Gastrocnemius medialis (tissue), 4 donors: ENCODE measurements at regions of chr7 and their contacts with region 1.

Region 1: DNA sequence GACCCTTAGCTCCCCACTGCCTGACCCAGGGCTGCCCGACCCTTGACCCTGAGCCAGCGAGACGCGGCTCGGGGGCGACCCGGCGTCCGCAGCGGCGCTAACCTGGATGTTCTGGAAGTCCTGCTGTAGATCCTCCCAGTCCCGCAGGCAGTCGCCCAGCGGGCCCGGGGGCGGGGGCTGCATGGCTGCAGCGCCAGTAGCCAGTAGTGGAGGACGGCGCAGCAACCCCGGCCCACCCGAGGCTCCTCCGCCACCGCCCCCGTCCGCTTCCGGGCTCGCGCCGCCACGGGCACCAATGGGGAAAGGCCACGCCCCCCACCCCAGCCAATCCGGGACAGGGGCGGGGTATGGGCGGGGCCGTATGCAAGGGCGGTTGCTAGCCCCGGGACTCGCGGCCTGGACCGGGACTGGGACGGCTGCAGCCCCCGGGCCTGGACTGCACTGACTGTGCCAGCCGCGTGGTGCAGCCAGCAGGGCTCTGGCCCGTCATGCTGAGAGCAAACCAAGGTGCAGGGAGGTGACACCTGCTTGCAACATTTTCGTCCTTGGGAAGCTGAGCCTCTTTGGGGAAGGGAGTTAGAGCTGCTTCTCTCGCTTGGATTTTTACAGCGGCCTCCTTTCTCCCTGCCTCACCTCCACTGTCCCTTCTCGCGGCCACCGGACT is at the start of gene TMEM120A:
- DNase-seq: peak; percentile 95 to 96
- ATAC-seq: peak; percentile 72 to 74
- H3K4me3 ChIP-seq: peak within 1 kb of the TSS; percentile 70 to 99 (median 82)
- H3K27ac ChIP-seq: peak within 1 kb of the TSS; percentile 94 to 99 (median 98)
- H3K4me1 ChIP-seq: peaks cover 34 to 45% of the 10 kb centered on the region in 2 donors
- H3K27me3 ChIP-seq: no peaks in the 10 kb centered on the region
- CTCF ChIP-seq: peak in 3 of 5 experiments; percentile 24 to 60 (median 35)
- POLR2A ChIP-seq: peak; percentile 90 to 93
- total RNA-seq, gene TMEM120A: 21.3 to 56.7 (median 38.2) TPM

Region 2: DNA sequence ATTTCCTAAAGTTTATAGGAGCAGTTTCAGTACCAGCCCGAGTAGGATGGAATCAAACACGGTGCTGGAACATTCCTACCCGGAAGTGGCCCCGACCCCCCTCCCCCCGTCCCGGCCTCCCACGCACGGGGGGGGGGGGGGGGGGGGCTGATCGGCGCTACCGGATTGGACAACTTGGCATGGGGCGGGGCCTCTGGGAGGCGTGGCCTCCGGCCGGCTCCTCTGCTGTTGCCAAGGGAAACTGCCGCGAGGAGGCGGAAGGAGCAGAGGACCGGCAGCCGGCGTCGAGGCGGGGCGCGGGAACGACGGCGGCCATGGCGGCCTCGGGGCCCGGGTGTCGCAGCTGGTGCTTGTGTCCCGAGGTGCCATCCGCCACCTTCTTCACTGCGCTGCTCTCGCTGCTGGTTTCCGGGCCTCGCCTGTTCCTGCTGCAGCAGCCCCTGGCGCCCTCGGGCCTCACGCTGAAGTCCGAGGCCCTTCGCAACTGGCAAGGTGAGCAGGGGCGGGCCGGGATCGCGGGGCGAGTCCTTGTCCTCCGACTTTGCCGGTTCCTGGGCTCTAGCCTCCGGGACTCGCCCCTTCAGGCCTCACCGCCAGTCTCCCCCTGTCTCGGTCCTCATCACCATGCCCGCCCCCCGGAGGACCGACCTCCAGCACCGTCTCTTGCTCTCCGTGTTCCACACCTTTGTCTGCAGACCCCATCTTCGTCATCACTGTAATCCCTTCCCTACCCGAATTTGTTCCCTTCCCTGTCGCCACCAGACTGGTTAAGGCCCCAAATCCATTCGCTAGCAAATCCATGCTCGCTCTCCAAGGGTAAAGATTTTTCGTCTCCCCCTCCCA is 115.5 kb before region 1 on chr7 and contains the start of gene RHBDD2:
- in situ Hi-C with region 1: no loop called
- intact Hi-C with region 1: loop called (anchors 2 kb)
- DNase-seq: peak; percentile 92 to 95
- ATAC-seq: peak; percentile 96 to 97
- H3K4me3 ChIP-seq: peak within 1 kb of the TSS; percentile 75 to 95 (median 86)
- H3K27ac ChIP-seq: peak within 1 kb of the TSS; percentile 75 to 87 (median 83)
- H3K4me1 ChIP-seq: peaks cover 15 to 19% of the 10 kb centered on the region in 2 donors
- H3K27me3 ChIP-seq: no peaks in the 10 kb centered on the region
- CTCF ChIP-seq: peak in 3 of 5 experiments; percentile 30 to 41 (median 41)
- POLR2A ChIP-seq: peak; percentile 93
- total RNA-seq, gene RHBDD2: 28.5 to 52.1 (median 38.2) TPM

Region 3: DNA sequence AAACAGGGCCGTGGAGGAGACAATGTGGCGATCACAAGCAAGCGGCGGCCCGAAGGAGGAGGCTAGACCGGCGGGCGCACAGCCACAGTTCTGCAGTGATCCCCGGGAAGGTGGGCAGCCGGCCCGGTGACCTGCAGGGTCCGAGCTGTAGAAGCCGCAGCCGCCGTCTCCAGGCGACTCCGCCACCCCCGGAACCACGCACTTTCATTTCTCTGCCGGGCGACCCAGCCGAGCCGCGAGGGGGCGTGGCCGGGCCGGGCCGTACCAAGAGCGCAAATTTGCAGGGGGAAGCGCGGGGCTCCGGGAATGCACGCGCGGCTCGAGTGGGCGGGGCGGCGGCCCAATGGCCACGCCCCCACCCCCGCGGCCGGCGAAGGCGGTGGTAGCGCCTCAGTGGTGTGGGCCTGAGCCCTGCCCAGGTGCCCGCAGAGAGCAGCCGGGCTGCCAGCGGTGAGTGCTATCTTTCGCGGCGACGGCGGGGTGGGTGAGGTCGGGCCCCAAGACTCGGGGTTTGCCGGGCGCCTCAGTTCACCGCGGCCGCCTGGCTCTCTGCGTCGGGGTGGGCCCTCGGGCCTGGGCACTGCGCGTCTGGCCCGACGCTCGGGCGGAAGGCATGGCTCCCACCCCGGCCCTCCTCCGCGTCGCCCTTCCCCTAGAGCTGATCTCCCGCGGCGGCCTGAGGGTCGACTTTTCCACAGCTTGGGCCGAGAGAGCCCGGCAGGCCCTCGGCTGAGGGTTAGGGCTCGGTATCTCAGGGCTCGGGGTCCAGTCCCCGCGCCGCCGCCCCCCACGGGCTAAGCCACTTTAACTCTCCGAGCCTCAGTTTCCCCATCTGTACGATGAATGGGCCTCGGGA is 79.6 kb before region 1 on chr7 and contains the start of gene POR:
- in situ Hi-C with region 1: loop called in 1 of 4 experiments (anchors 10 kb)
- intact Hi-C with region 1: loop called (anchors 1 kb)
- DNase-seq: peak; percentile 89 to 93
- ATAC-seq: peak; percentile 86 to 88
- H3K4me3 ChIP-seq: peak within 1 kb of the TSS; percentile 96 to 100 (median 98)
- H3K27ac ChIP-seq: peak within 1 kb of the TSS; percentile 95 to 99 (median 96)
- H3K4me1 ChIP-seq: peaks cover 32 to 35% of the 10 kb centered on the region in 2 donors
- H3K27me3 ChIP-seq: no peaks in the 10 kb centered on the region
- CTCF ChIP-seq: peak in 3 of 5 experiments; percentile 13 to 57 (median 22)
- POLR2A ChIP-seq: peak; percentile 99 to 100
- total RNA-seq, gene POR: 85.7 to 218 (median 115) TPM

Region 4: DNA sequence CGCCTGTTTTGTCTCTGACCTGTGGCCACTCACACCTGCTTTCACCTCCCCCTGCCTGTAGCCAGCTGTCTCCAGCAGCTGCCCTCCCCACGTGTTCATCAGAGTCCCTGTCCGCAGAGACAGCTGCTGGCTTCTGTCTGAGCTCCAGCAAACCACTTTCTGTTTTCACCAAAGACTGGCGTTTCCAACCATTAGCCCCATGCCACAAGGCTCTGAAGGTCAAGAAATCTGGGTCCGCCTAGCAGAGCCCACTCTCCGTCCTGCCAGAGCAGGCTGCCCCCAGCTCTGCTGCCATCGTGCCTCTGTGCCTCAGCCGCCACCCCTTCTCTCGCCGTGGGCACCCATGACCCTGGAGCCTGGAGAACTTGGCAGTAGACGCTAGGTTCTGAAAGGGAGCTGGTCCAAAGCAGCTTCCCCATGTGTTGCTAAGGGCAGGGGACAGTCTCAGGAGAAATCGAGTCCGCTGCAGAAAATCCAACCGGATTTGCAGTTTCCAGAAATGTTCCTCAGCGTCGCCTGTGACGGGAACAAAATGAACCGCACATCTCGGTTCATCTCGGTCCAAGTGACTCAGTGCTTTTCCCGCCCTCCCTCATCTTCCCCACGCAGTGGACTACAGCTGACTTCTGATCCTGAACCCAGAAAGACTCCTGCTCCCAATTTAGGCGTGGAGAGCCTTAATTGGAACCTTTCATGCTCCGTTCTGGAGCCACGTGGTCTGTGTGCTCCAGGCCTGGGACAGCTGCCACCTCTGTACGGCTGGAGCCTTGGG is 28.1 kb before region 1 on chr7:
- in situ Hi-C with region 1: no loop called
- intact Hi-C with region 1: loop called (anchors 2 kb)
- DNase-seq: peak; percentile 91 to 92
- ATAC-seq: peak; percentile 72 to 75
- H3K4me3 ChIP-seq: peak overlapping the region; percentile 38 to 61 (median 52)
- H3K27ac ChIP-seq: peak overlapping the region; percentile 91 to 97 (median 94)
- H3K4me1 ChIP-seq: peaks cover 76 to 86% of the 10 kb centered on the region in 2 donors
- H3K27me3 ChIP-seq: no peaks in the 10 kb centered on the region
- CTCF ChIP-seq: no peak
- POLR2A ChIP-seq: peak; percentile 51 to 76

Region 5: GRCh38 chr7:76047811-76048667 is 53.5 kb after region 1 on chr7 and contains the starts of genes MDH2 and STYXL1:
- in situ Hi-C with region 1: no loop called
- intact Hi-C with region 1: loop called (anchors 1 kb)
- DNase-seq: peak; percentile 92 to 96
- ATAC-seq: peak; percentile 90 to 96
- H3K4me3 ChIP-seq: peak within 1 kb of the TSS; percentile 89 to 98 (median 94)
- H3K27ac ChIP-seq: peak within 1 kb of the TSS; percentile 93 to 98 (median 96)
- H3K4me1 ChIP-seq: peaks cover 43 to 51% of the 10 kb centered on the region in 2 donors
- H3K27me3 ChIP-seq: no peaks in the 10 kb centered on the region
- CTCF ChIP-seq: no peak
- POLR2A ChIP-seq: peak; percentile 84 to 92
- total RNA-seq, gene MDH2: 236 to 344 (median 284) TPM
- total RNA-seq, gene STYXL1: 10.0 to 31.5 (median 17.3) TPM